Breast epithelium (tissue), 4 donors: ENCODE measurements at regions of chr1 and their contacts with region 1.

Region 1: GRCh38 chr1:42298520-42298919 is 36.5 kb downstream of the FOXJ3 start:
- DNase-seq: no peak
- H3K4me3 ChIP-seq: no peak overlapping the region
- H3K27ac ChIP-seq: no peak overlapping the region
- H3K4me1 ChIP-seq: no peaks in the 10 kb centered on the region
- H3K27me3 ChIP-seq: no peaks in the 10 kb centered on the region
- CTCF ChIP-seq: no peak
- POLR2A ChIP-seq: no peak

Region 2: DNA sequence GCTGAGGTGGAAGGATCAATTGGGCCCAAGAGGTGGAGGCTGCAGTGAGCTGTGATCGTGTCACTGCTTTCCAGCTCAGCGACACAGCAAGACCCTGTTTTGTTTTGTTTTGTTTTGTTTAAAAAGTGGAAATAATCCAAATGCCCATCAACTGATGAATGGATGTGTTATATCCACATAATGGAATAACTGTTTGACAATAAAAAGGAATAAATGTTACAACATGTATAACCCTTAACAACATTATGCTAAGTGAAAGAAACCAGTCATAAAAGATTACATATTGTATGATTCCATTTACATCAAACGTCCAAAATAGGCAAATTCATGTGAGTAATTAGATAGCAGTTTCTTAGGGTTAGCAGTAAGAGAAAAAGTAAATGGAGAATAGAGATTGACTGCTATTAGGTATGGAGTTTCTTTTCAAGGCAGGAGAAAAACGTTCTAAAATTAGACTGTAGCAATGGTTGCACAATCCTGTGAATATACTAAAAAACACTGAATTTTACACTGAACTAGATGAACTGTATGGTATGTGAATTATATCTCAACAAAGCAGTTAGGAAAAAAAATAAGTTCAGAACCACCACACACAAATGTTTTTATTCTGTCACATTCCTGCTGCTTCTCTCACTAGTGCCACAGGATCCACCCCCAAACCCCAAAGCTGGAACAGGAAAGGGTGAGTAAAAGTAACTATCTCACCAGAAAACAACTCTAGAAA is 20.8 kb after region 1 on chr1:
- intact Hi-C with region 1: loop called (anchors 2 kb)
- DNase-seq: no peak
- H3K4me3 ChIP-seq: no peak overlapping the region
- H3K27ac ChIP-seq: peak overlapping the region; percentile 10 to 63
- H3K4me1 ChIP-seq: peaks cover 0 to 8% of the 10 kb centered on the region in 2 donors
- H3K27me3 ChIP-seq: no peaks in the 10 kb centered on the region
- CTCF ChIP-seq: no peak
- POLR2A ChIP-seq: no peak

Region 3: DNA sequence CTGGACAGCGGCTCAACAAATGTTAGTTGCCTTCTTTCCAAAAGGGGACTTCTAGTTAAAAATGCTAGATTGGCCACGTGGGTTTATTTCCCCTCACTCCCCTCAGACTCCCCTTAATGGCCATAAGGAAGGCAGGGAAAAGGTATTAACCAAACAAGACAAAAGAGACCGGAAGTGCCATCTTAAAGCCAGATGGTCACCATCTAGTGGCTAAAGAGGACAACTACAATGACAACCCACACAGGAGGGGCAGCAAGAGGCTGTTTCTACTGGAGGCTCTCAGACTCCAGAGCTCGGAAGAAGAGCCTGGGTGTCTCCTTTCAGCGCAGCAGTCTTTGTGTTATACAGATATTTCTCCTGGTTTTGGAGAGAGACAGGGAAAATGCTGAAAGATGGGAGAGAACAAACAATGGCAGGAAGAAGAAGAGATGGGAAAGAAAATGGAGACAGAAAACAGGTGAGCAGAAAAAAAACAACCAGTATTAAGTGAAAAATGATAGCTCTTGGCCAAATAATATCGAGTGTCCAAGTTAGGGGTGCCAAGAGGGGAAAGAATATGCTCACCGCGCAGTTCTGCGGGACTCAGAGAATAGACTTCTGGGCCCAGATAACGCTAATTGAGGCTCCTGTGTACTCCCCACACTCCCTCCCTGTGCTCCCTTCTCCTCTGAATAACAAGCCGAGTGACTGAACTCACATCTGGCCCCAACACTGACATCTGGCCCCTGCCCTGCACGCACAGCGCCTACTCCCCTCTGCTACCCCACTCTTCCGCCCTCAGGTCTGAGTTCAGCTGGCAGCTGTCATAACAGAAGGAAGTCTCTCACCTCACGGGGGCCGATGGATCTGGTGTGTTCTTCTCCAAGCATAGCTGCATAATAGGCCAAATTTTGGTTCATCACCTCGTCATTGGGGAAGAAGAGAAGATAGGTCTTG is 458.7 kb after region 1 on chr1:
- intact Hi-C with region 1: no loop called
- DNase-seq: no peak
- H3K4me3 ChIP-seq: no peak overlapping the region
- H3K27ac ChIP-seq: no peak overlapping the region
- H3K4me1 ChIP-seq: no peaks in the 10 kb centered on the region
- H3K27me3 ChIP-seq: no peaks in the 10 kb centered on the region
- CTCF ChIP-seq: peak; percentile 20 to 72 (median 61)
- POLR2A ChIP-seq: no peak

Region 4: GRCh38 chr1:42838482-42839190 is 540.1 kb after region 1 on chr1:
- intact Hi-C with region 1: no loop called
- DNase-seq: no peak
- H3K4me3 ChIP-seq: no peak overlapping the region
- H3K27ac ChIP-seq: no peak overlapping the region
- H3K4me1 ChIP-seq: no peaks in the 10 kb centered on the region
- H3K27me3 ChIP-seq: no peaks in the 10 kb centered on the region
- CTCF ChIP-seq: no peak
- POLR2A ChIP-seq: no peak